ENCODE measurements at regions of chr4 and their contacts with region 1.

Region 1: DNA sequence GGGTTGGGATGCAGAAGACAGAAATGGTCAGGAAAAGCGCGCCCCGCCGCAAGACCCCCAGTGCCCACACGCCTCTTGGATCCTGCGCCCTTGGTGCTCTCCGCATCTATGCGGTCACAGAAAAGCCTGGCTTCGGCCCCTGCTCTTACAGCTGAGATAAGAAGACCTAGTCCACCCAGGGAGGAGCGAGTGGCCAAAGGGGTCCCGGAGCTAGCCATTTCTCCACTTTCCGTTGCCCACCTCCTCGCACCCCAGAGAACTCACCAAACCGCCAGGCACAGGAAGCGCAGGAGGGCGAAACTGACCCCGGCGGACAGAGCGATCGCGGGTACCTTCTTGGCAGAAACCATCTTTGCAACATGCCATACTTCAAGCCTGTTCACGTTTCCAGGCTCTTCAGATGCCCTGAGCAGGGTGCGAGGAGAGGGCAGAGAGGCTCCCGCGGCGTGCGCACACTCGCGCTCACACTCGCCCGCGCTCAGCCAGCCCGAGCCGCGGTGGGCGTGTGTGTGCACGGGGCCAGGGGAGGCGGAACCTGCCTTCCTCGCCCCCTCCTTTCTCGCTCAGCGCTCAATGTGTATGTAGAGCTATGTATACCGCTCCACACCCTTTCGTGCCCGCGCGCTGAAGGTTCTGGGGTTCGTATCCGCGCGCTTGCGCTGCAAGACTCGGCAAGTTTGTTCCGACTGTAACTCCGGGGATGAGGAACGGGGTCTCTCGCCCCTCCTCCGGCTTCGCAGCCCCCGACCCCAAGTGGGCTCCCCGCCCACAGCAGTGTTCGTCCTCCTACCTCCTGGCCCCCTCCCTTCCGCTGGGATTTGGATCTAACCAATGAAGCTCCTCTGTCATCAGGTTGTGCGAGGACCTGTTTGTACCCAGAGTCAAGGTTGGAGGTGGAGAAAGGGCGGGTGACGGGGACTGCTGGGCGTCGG is at the start of gene GABRA4:
- DNase-seq: no peak
- H3K4me3 ChIP-seq: peak within 1 kb of the TSS; percentile 52 to 53
- H3K27ac ChIP-seq: peak within 1 kb of the TSS in 1 of 2 donors; percentile 36
- H3K4me1 ChIP-seq: peaks cover 0 to 14% (median 10%) of the 10 kb centered on the region in 4 donors
- H3K27me3 ChIP-seq: peaks cover 0 to 25% of the 10 kb centered on the region in 2 donors
- CTCF ChIP-seq: no peak

Region 2: GRCh38 chr4:46949822-46950221 is 43.5 kb before region 1 on chr4:
- intact Hi-C with region 1: loop called (anchors 2 kb)
- DNase-seq: no peak
- H3K4me3 ChIP-seq: no peak overlapping the region
- H3K27ac ChIP-seq: no peak overlapping the region
- H3K4me1 ChIP-seq: peaks cover 0 to 60% (median 2%) of the 10 kb centered on the region in 4 donors
- H3K27me3 ChIP-seq: no peaks in the 10 kb centered on the region
- CTCF ChIP-seq: no peak